Posterior vena cava (tissue), 2 donors: ENCODE measurements at regions of chr9 and their contacts with region 1.

Region 1: DNA sequence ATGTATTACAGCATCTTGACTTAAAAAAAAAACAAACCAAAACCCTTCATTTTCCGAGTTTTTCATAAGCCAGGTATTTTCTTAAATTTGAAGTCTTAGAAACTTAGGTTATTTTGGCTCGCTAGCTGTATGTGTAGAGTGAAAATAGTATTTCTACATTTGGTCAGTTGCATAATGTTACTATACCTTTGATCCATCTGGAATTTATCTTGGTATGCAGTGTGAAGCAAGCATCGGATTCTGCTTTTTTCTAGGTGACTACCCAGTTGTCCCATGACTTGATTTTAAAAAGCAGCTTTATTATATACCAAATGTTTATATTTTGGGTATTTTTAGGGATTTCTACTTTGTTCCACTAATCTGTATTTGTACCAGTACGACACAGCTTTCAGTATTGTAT is 27.7 kb downstream of the UBAP1 start:
- DNase-seq: no peak

Region 2: GRCh38 chr9:34059954-34060353 is 146.6 kb before region 1 on chr9:
- intact Hi-C with region 1: loop called in 1 of 2 experiments (anchors 2 kb)
- DNase-seq: peak; percentile 0

Region 3: DNA sequence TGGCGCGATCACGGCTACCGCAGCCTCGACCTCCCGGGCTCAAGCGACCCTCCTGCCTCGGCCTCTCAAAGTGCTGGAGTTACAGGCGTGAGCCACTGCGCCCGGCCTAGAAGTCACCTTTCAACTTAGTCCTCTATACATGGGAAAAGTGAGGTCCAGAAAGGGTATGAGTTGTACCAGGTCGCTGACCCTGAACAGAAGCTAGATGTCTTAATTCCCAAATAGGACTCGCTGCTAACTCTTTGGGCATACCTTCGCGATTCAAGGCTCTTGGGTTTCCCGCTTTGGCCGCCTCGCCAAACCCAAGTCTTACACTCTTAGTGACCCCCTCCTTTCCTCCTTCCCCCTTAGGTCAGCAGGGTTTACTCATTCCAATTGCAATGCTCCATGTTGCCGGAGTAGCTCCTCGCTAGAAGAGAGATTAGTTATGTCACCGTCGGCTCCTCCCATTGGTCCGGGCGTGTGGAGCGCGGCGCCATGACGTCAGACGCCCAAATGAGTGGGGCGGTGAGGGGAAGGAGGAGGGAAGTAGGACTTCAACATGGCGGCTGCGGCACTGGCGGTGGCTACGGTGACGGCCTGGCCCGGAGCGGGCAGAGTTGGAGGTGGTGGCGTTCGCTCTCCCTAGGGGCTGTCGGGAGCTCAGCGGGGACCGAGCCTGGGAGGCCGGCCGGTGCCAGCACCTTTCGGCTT is 27.9 kb before region 1 on chr9 and contains the start of gene UBAP1:
- intact Hi-C with region 1: no loop called
- DNase-seq: peak; percentile 99
- total RNA-seq, gene UBAP1: 42.8 to 44.9 TPM